Upper lobe of right lung (tissue), 1 donor: ENCODE measurements at regions of chr7 and their contacts with region 1.

Region 1: DNA sequence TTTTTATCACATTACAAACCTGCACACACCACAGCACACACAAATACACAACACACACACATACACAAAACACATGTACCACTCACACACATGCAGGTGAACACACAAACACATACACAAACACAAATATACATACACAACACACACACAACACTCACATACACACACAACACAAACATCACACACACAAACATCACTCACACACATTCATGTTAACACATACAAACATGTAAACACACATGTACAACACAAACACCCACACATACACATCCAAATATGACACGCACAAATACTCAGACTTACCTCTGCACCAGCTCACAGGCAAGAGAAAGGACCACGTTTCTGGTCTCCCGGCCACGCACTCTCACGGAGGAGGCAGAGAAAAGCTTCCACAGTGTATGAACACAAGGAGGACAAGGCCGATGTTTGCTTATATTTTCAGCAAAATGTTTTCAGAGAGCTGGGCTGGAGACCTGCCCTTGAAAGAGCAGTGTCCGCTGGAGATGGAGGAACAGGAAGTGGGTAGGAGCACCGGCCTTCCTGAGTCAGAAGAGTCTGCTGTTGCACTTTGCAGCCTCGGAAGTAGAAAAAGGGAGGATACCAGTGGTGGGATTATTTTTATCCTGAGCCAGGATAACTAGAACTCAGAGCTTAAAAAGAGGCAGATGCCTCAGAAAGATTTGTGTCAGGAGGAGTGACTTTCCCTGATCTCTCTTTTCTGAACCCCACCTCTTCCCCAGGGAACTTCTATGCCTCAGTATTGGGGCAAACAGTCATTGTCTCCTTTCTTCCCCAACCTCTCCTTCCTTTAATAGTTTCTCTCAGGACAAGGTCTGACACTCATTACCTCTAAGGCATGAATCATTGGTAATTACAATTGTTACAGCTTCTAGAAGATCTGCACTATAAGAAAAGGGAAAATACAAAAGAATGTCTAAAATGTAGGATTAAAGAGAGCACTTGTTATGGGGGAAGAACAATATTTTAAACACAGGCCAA is at the start of gene GIMAP6:
- DNase-seq: no peak
- ATAC-seq: peak; percentile 76
- H3K4me3 ChIP-seq: peak within 1 kb of the TSS; percentile 58
- H3K27ac ChIP-seq: peak within 1 kb of the TSS; percentile 86
- H3K4me1 ChIP-seq: peaks cover 20% of the 10 kb centered on the region
- H3K27me3 ChIP-seq: no peaks in the 10 kb centered on the region
- CTCF ChIP-seq: no peak
- total RNA-seq, gene GIMAP6: 61.7 TPM

Region 2: GRCh38 chr7:150740053-150740452 is 107.9 kb after region 1 on chr7:
- intact Hi-C with region 1: loop called (anchors 10 kb)
- DNase-seq: no peak
- ATAC-seq: no peak
- H3K4me3 ChIP-seq: peak overlapping the region; percentile 61
- H3K27ac ChIP-seq: peak overlapping the region; percentile 87
- H3K4me1 ChIP-seq: peaks cover 13% of the 10 kb centered on the region
- H3K27me3 ChIP-seq: no peaks in the 10 kb centered on the region
- CTCF ChIP-seq: no peak